ENCODE measurements at regions of chr14 and their contacts with region 1.

Region 1: DNA sequence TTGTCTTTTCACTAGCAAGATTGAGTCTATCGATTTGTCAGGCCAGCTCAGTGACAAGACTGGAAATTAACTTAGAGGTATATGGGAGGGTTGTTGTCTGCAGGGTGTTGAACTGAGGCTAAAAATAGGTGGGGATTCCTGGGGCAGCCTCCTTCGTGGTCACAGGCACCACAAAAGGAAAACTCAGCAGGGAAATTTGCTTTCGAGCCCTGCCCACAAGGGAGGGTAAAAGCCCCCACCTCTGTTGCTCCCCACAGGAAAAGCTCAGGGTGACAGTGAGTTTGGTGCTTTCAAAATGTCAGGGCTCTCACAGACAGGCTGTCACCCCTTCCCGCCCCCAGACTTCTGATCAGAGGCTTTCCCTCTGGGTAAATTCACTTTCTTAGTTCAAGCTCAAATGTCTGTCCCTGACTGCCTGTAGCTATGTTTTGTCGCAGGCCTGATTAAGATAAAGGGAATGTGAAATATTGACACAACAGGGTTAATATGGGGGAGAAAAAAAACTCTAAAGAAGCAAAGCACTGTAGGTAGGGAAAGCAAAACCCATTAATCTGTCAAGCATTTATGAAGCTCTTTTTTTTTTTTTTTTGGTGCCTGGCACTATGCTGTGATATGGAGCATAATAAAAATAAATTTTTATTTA is 11.7 kb upstream of the NFKBIA start:
- DNase-seq: no peak
- H3K4me3 ChIP-seq: no peak overlapping the region
- H3K27ac ChIP-seq: no peak overlapping the region
- H3K4me1 ChIP-seq: no peaks in the 10 kb centered on the region
- H3K27me3 ChIP-seq: no peaks in the 10 kb centered on the region
- CTCF ChIP-seq: no peak
- POLR2A ChIP-seq: no peak

Region 2: DNA sequence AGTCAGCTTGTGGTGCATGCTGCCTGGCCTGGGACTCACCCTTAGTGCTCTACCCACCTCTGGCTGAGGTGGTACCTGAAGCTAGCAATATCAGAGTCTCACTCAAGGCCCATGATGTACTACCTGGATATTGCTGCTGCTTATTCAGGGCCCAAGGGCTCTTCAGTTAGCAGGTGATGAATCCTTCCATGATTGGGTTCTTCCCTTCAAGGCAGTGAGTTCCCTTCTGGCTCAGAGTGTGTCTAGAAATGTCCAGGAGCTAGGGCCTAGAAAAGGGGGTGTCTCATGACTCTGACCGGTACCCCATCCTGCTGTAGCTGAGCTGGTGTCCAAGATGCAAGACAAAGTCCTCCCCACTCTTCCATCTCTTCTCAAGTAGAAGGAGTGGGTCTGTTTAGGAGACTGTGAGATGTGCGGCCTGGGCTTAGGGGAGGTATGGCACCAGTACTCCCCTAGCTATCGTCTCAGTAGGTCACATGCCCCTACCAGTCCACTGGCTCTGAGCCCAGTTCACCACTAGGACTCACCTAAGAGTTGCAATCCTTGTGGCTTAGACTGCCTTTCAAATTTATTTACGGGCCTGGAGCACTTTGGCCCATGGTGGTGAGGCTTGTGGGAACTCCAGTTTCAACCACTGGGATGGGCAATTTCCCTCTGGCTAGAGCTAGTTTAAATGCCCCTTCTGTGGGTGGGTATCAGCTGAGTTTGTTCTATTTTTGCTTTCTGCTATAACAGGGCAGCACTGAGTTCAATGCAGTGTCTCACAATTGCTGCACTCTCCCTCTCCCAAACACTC is 281.7 kb before region 1 on chr14:
- intact Hi-C with region 1: loop called in 1 of 2 experiments (anchors 5 kb)
- DNase-seq: no peak
- H3K4me3 ChIP-seq: no peak overlapping the region
- H3K27ac ChIP-seq: no peak overlapping the region
- H3K4me1 ChIP-seq: no peaks in the 10 kb centered on the region
- H3K27me3 ChIP-seq: no peaks in the 10 kb centered on the region
- CTCF ChIP-seq: no peak
- POLR2A ChIP-seq: no peak

Region 3: GRCh38 chr14:35140718-35141581 is 275.3 kb before region 1 on chr14:
- intact Hi-C with region 1: loop called (anchors 5 kb)
- DNase-seq: no peak
- H3K4me3 ChIP-seq: no peak overlapping the region
- H3K27ac ChIP-seq: no peak overlapping the region
- H3K4me1 ChIP-seq: peaks cover 0 to 4% of the 10 kb centered on the region in 2 donors
- H3K27me3 ChIP-seq: no peaks in the 10 kb centered on the region
- CTCF ChIP-seq: peak in 4 of 6 experiments; percentile 57 to 79 (median 64)
- POLR2A ChIP-seq: no peak

Region 4: DNA sequence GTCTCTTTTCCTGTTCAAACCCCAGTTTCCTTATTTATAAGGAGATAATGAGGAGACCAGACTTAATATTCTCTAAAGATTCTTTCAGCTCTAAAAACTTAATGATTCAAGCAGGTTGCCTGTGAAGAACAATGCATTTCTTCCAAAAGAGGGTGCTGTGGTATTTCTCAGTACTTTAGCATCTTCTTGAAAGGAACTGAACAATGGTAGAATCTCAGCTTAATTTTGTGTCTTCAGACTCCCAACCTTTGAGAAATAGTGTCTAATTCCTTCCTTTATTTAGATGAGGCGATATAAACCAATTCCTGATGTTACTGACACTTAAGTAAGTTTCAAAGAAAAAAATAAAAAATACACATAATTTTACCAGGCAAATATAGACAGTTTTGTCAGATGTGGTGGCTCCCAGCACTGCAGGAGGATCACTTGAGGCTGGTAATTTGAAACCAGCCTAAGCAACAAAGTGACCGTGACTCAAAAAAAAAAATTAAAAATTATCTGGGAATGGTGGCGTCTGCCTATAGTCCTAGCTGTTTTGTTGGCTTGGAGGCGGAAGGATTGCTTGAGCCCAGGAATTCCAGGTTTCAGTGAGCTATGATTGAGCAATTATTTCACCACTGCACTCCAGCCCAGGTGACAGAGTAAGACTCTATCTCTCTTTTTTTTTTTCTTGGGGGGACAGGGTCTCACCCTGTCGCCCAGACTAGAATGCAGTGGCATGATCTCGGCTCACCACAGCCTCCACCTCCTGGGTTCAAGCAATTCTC is 200.9 kb before region 1 on chr14:
- intact Hi-C with region 1: loop called in 1 of 2 experiments (anchors 5 kb)
- DNase-seq: no peak
- H3K4me3 ChIP-seq: no peak overlapping the region
- H3K27ac ChIP-seq: no peak overlapping the region
- H3K4me1 ChIP-seq: peaks cover 0 to 18% of the 10 kb centered on the region in 2 donors
- H3K27me3 ChIP-seq: no peaks in the 10 kb centered on the region
- CTCF ChIP-seq: peak in 5 of 6 experiments; percentile 28 to 58 (median 47)
- POLR2A ChIP-seq: no peak

Region 5: DNA sequence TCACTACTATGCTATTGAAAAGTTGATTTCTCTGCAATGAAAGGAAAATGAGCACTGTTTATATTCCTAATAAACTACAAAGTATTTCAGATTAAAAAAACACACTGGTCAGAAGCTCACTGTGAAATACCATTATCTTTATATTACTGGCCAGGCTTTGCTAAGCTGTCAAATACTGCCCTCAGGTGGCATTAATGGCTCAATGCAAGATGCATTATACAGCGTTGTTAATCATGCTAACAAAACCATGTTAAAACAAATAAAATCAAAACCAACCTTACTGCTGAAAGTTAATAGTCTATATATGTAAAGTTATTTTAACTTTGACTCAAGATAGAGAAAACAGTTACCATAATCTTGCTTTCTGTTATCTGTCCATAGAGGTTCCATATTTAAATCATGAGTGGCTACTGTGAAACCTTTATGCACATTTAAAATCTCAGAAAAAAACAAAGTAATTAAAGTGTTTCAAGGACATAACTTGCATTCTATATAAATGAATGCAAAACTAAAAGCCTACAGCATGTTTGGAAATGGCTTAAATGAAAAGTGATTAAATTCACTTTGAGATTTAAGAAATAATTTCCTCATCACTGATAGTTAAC is 271.2 kb after region 1 on chr14:
- intact Hi-C with region 1: loop called in 1 of 2 experiments (anchors 10 kb)
- DNase-seq: peak in 4 of 7 donors; percentile 20 to 46 (median 30)
- H3K4me3 ChIP-seq: no peak overlapping the region
- H3K27ac ChIP-seq: no peak overlapping the region
- H3K4me1 ChIP-seq: peaks cover 0 to 3% of the 10 kb centered on the region in 2 donors
- H3K27me3 ChIP-seq: no peaks in the 10 kb centered on the region
- CTCF ChIP-seq: peak; percentile 55 to 85 (median 68)
- POLR2A ChIP-seq: no peak

Measured in adrenal gland (tissue), 19 donors.